T-cell (primary cell): ENCODE measurements at regions of chr2 and their contacts with region 1.

Region 1: GRCh38 chr2:205849136-205849535 is 166.8 kb downstream of the NRP2 start:
- DNase-seq: no peak
- ATAC-seq: no peak
- H3K4me3 ChIP-seq: no peak overlapping the region
- H3K4me3 Mint-ChIP-seq: no peak overlapping the region
- H3K27ac ChIP-seq: no peak overlapping the region
- H3K27ac Mint-ChIP-seq: no peak overlapping the region
- H3K4me1 ChIP-seq: no peaks in the 10 kb centered on the region
- H3K4me1 Mint-ChIP-seq: no peaks in the 10 kb centered on the region
- H3K27me3 ChIP-seq: peaks cover 0 to 13% of the 10 kb centered on the region in 2 experiments
- H3K27me3 Mint-ChIP-seq: peaks cover 13 to 30% of the 10 kb centered on the region in 2 donors

Region 2: DNA sequence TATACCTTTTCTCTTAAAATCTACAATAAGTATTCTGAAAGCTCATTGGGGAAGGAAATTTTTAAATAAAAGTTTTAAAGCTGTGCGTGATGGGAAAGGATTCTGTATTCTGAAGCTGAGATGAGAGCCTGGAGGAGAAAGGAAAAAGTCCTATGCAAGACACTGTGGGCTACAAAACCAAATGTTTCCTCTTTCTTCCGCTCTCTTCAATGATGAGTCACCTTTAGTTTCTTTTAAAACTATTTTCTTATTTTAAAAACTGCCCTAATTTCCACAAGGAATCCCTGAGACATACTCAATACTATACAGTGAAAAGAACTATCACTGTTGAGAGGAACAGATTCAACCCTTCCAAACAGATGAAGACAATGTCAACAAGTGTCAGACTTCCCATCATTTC is 149.4 kb after region 1 on chr2:
- CTCF ChIA-PET with region 1: no interaction called
- POLR2A ChIA-PET with region 1: interaction called in 1 of 2 experiments, 12 read pairs
- DNase-seq: no peak
- ATAC-seq: no peak
- H3K4me3 ChIP-seq: no peak overlapping the region
- H3K4me3 Mint-ChIP-seq: no peak overlapping the region
- H3K27ac ChIP-seq: no peak overlapping the region
- H3K27ac Mint-ChIP-seq: peak overlapping the region in 1 of 2 donors; percentile 16
- H3K4me1 ChIP-seq: no peaks in the 10 kb centered on the region
- H3K4me1 Mint-ChIP-seq: peaks cover 0 to 5% (median 2%) of the 10 kb centered on the region in 3 donors
- H3K27me3 ChIP-seq: no peaks in the 10 kb centered on the region
- H3K27me3 Mint-ChIP-seq: no peaks in the 10 kb centered on the region

Region 3: DNA sequence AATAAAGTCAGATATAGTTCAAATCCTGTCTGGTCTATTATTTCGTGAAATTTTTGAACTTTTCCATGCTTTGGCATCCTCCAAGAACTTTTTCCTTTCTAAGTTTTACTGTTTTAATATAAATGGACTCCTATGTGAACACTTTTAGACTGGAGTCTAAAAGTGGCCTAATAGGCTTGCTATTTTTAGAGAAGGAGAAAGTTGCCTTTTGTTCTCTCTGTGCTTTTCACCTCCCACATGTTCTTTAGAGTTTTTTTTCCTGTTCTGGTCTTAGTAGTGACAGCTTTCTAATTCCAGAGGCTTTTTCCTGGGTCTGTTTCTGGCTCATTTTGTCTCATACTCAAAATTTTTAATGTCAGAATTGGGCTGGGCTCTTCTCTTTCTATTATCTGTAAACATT is 666.4 kb after region 1 on chr2:
- CTCF ChIA-PET with region 1: no interaction called
- POLR2A ChIA-PET with region 1: no interaction called
- DNase-seq: no peak
- ATAC-seq: no peak
- H3K4me3 ChIP-seq: no peak overlapping the region
- H3K4me3 Mint-ChIP-seq: no peak overlapping the region
- H3K27ac ChIP-seq: no peak overlapping the region
- H3K27ac Mint-ChIP-seq: no peak overlapping the region
- H3K4me1 ChIP-seq: peaks cover 3 to 11% of the 10 kb centered on the region in 2 experiments
- H3K4me1 Mint-ChIP-seq: peaks cover 8 to 15% (median 12%) of the 10 kb centered on the region in 3 donors
- H3K27me3 ChIP-seq: no peaks in the 10 kb centered on the region
- H3K27me3 Mint-ChIP-seq: peaks cover 8 to 11% of the 10 kb centered on the region in 2 donors